HCT116 (cell line): ENCODE measurements at regions of chr4 and their contacts with region 1.

Region 1: GRCh38 chr4:174826660-174827059 is 2.4 kb downstream of the GLRA3 start:
- DNase-seq: no peak
- ATAC-seq: no peak
- H3K4me3 ChIP-seq: no peak overlapping the region
- H3K27ac ChIP-seq: no peak overlapping the region
- H3K4me1 ChIP-seq: no peaks in the 10 kb centered on the region
- H3K27me3 ChIP-seq: no peaks in the 10 kb centered on the region
- CTCF ChIP-seq: peak in 1 of 3 experiments; percentile 35; a peak in 1 of 6 replicates
- POLR2A ChIP-seq: no peak
- RAD21 ChIP-seq: no peak

Region 2: DNA sequence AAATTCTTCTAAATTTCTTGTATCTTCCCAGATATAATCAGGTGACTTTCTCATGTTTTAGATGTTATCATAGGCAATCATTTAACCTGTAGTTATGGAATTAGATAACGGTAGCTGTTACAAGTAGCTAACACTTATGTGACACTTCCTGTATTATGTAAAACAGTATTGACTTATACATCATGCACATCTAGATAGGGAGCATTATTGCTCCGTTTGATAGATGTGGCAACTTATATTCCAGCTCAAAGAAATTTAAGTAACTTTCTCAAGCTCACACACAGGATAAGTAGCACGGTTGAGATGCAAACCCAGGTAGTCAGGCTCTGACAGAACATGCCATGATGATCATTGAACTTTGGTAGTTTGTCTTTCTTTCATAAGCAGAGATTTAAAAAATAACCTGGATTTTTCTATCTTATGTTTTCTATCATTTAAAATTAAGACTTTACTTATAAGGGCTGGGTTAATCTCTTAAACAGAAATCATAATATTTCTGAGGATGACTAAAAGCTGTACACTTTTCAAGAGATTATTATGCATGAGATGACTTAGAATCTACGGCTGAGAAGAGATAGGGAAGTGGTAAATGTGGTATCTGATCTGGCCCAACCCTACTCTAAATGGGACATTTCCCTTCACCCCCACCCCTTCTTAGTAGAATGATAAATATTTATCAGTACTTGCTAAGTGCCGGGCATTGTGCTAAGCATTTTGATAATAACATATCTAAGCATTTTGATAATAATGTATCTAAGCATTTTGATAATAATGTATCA is 235.2 kb before region 1 on chr4:
- CTCF ChIA-PET with region 1: no interaction called
- POLR2A ChIA-PET with region 1: no interaction called
- RAD21 ChIA-PET with region 1: no interaction called
- intact Hi-C with region 1: no loop called
- DNase-seq: no peak
- ATAC-seq: no peak
- H3K4me3 ChIP-seq: no peak overlapping the region
- H3K27ac ChIP-seq: no peak overlapping the region
- H3K4me1 ChIP-seq: peaks cover 0 to 5% of the 10 kb centered on the region in 2 experiments; a peak in 2 of 4 replicates
- H3K27me3 ChIP-seq: no peaks in the 10 kb centered on the region
- CTCF ChIP-seq: no peak
- POLR2A ChIP-seq: no peak
- RAD21 ChIP-seq: no peak

Region 3: DNA sequence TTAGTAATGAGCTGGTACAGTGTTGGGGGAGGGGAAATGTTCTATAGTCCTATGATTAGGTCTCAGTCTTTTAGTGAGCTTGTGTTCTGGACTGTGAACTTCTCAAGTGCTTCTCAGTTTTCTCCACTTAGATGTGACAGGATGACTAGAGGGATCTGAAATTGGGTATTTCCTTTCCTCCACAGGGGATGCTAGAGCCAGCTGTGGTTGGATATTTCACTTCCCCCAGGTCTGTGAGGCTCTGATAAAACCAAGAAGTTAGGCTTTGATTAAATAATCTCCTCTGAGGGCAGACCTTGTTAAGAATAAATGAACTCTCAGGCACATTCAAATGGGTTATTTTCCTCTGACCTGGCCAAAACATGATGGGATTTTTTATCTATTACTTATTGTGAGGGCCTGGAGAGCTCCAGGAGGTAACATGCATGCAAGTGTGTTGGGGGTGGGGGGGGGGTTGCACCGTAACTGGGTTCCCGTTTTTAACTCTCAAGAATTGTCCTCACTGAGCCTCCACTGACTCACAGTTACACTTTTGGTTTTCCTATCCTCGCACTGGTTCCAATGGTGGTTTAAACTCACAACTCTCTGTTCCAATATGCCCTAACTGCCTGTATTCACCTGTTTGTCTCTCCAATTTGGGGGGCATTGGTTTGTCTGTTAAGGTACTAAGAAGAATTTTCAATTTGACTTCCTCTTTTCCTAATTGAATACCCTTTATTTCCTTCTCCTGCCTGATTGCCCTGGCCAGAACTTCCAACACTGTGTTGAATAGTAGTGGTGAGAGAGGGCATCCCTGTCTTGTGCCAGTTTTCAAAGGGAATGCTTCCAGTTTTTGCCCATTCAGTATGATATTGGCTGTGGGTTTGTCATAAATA is 30.5 kb after region 1 on chr4:
- CTCF ChIA-PET with region 1: no interaction called
- POLR2A ChIA-PET with region 1: no interaction called
- RAD21 ChIA-PET with region 1: no interaction called
- intact Hi-C with region 1: loop called (anchors 1 kb)
- DNase-seq: no peak
- ATAC-seq: no peak
- H3K4me3 ChIP-seq: no peak overlapping the region
- H3K27ac ChIP-seq: no peak overlapping the region
- H3K4me1 ChIP-seq: no peaks in the 10 kb centered on the region
- H3K27me3 ChIP-seq: no peaks in the 10 kb centered on the region
- CTCF ChIP-seq: no peak
- POLR2A ChIP-seq: no peak
- RAD21 ChIP-seq: no peak